ENCODE measurements at regions of chr20 and their contacts with region 1.

Region 1: DNA sequence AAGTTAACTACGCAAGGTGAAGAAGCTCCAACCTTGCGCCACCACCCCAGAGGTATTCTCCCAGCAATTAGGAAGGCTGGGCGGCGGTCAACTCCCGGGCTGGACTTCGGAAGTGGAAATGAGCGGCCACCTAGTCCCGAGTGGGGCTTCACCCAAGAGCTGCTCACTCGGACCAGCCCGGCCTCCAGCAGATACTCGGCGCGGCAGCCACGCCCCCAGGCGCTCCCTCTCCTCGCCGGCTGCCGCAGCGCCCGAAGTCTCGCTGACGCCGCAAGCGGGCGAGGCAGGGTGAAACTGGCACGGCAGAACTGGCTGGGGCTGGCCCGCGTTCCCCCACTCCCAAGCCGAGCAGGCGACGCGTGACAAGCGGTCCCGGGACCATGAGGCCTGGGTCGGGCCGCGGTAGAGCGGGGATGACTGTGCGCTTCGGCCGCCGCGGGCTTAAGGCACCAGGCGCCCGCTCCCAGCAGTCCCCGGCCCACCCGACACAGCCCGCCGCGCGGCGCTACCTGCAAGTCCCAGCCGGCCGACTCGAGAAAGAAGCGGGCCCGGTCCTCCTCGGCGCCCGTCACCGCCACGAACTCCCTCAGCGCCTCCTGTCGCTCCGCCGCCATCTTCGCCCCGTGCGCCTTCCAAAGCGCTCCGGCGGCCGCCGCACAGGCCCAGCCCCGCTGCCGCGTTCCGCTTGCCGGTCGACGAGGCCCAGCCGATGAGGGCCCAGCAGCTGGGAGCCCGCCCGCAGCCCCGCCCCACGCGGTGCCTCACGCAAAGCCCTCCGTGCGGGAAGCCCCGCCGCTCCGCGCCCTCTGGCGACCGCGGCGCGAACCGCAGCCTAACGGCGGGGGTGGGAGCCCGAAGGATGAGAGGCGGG is at the start of gene NSFL1C:
- DNase-seq: peak; percentile 96
- CTCF ChIP-seq: peak; percentile 97

Region 2: DNA sequence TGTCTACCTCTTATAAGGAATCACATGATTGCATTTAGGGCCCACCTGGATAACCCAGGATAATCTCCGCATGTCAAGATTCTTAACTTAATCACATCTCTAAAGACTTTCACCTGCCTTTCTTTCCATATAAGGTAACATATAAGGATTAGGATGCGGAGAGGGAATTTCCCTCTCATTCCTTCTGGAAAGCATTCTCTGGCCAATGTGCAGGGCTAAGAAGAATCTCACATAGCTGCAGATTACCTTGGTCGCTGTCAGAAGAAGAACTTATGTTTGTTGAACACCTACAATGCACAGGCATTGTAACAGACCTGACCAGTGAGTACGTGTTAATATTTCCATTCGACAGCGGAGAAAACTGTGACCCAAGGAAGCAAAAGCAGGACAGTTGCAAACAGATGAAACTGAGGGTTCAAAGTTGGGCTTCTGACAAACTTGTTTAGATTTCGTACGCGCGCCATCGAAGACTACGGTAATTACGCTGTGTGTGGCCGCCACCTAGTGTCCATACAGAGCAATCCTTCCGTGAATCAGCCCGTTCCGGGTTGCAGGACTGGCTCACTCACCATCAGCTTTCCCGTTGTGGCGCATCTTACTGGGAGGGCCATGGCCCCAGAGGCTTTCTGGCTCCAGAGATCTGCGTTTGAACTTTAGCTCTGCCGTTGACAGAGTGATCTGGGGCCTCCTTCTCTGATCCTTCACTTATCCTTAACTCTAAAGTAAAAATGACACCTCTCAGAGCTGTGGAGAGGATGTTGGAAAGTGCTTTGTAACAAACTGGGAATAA is 253.6 kb before region 1 on chr20:
- CTCF ChIA-PET with region 1: no interaction called
- POLR2A ChIA-PET with region 1: no interaction called
- DNase-seq: peak; percentile 66
- CTCF ChIP-seq: peak; percentile 91

Region 3: GRCh38 chr20:1325173-1326030 is 141.0 kb before region 1 on chr20:
- CTCF ChIA-PET with region 1: interaction called, 10 read pairs
- POLR2A ChIA-PET with region 1: interaction called, 3 read pairs
- DNase-seq: peak; percentile 99
- CTCF ChIP-seq: no peak

Region 4: GRCh38 chr20:1437235-1437904 is 29.1 kb before region 1 on chr20:
- CTCF ChIA-PET with region 1: interaction called, 44 read pairs
- POLR2A ChIA-PET with region 1: no interaction called
- DNase-seq: peak; percentile 79
- CTCF ChIP-seq: peak; percentile 85

Region 5: GRCh38 chr20:1450926-1451491 is 15.4 kb before region 1 on chr20:
- CTCF ChIA-PET with region 1: interaction called, 21 read pairs
- POLR2A ChIA-PET with region 1: no interaction called
- DNase-seq: no peak
- CTCF ChIP-seq: no peak

Region 6: GRCh38 chr20:1456300-1456699 is 10.1 kb before region 1 on chr20:
- CTCF ChIA-PET with region 1: interaction called, 18 read pairs
- POLR2A ChIA-PET with region 1: no interaction called
- DNase-seq: no peak
- CTCF ChIP-seq: no peak

Region 7: GRCh38 chr20:1478576-1478975 is 12.1 kb after region 1 on chr20:
- CTCF ChIA-PET with region 1: interaction called, 12 read pairs
- POLR2A ChIA-PET with region 1: no interaction called
- DNase-seq: no peak
- CTCF ChIP-seq: no peak

Region 8: GRCh38 chr20:1503564-1504227 is 37.2 kb after region 1 on chr20:
- CTCF ChIA-PET with region 1: interaction called, 23 read pairs
- POLR2A ChIA-PET with region 1: no interaction called
- DNase-seq: peak; percentile 79
- CTCF ChIP-seq: peak; percentile 97

Region 9: DNA sequence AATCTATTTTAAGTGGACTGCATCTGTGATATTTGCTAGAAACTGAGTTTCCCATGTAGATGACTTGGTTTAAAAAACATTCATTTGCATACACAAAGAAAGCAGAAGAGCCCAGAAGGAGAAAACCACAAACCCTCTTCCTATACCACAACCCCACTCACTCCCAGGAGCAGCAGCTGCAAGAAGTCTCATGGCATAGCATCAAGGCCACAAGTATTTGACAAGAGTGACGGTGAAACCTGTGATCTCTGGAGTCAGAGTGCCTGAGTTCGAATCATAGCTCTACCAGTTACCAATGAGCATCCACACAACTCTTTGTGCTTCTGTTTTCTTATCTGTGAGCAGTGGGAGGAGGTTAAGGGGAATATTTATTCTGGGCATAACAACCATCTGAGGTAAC is 235.9 kb after region 1 on chr20:
- CTCF ChIA-PET with region 1: no interaction called
- POLR2A ChIA-PET with region 1: no interaction called
- DNase-seq: no peak
- CTCF ChIP-seq: no peak

Measured in GM10248 (cell line).